GM12878 (cell line): ENCODE measurements at regions of chr3 and their contacts with region 1.

Region 1: DNA sequence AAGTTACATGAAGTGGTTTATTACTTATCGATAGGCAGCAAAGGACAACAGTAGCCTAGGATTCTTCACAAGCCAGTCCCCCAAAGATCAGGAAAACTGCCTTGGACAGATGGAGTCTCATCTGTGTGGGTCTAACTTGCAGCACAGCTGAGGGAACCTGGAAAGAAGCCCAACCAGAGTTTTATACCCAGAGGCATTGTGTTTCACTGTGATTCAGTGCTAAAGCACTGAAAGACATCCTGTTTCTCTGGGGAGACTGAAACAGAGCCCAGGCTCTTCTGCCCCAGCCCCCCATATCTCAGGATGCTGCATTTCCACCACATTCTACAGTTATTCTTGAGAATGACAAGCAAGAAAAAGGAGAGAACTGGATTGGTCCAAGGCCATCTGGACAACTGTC is 48.2 kb upstream of the PYDC2 start:
- DNase-seq: no peak
- ATAC-seq: no peak; the same call in 2 of the 3 replicates
- H3K4me3 ChIP-seq: no peak overlapping the region
- H3K27ac ChIP-seq: no peak overlapping the region
- H3K4me1 ChIP-seq: no peaks in the 10 kb centered on the region
- H3K27me3 ChIP-seq: no peaks in the 10 kb centered on the region
- CTCF ChIP-seq: no peak
- EP300 ChIP-seq: no peak
- POLR2A ChIP-seq: no peak
- RAD21 ChIP-seq: no peak

Region 2: GRCh38 chr3:191136347-191136746 is 276.4 kb before region 1 on chr3:
- CTCF ChIA-PET with region 1: interaction called, 3 read pairs
- POLR2A ChIA-PET with region 1: no interaction called
- RAD21 ChIA-PET with region 1: interaction called, 3 read pairs
- SMC1A ChIA-PET with region 1: interaction called, 5 read pairs
- in situ Hi-C with region 1: no loop called
- intact Hi-C with region 1: loop called (anchors 2 kb)
- DNase-seq: no peak
- ATAC-seq: peak; percentile 70
- H3K4me3 ChIP-seq: no peak overlapping the region
- H3K27ac ChIP-seq: no peak overlapping the region
- H3K4me1 ChIP-seq: peaks cover 24% of the 10 kb centered on the region
- H3K27me3 ChIP-seq: no peaks in the 10 kb centered on the region
- CTCF ChIP-seq: peak; percentile 43 to 51 (median 46); a peak in 4 of 6 replicates
- EP300 ChIP-seq: no peak
- POLR2A ChIP-seq: no peak
- RAD21 ChIP-seq: peak; percentile 76

Region 3: DNA sequence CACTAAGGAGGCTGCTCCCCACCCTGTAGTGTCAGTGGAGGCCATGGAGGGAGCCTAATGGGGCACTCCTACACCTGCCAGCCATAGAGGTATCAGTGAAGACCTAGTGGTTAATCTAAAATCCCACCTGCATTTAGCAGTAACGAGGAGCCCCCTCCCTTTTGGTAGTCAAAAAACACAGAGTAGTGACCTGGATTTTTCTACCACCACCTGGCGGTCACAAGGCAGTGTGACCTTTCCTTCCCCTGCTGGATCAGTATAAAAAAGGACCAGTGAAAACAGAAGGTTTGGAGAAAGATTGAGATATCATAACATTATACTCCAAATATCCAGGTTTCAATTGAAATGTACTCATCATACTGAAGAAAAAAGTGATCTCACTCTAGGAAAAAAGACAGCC is 289.4 kb after region 1 on chr3:
- CTCF ChIA-PET with region 1: no interaction called
- POLR2A ChIA-PET with region 1: no interaction called
- RAD21 ChIA-PET with region 1: no interaction called
- SMC1A ChIA-PET with region 1: no interaction called
- in situ Hi-C with region 1: no loop called
- intact Hi-C with region 1: loop called (anchors 5 kb)
- DNase-seq: no peak
- ATAC-seq: no peak; the same call in 2 of the 3 replicates
- H3K4me3 ChIP-seq: no peak overlapping the region
- H3K27ac ChIP-seq: no peak overlapping the region
- H3K4me1 ChIP-seq: no peaks in the 10 kb centered on the region
- H3K27me3 ChIP-seq: no peaks in the 10 kb centered on the region
- CTCF ChIP-seq: no peak
- EP300 ChIP-seq: no peak
- POLR2A ChIP-seq: no peak
- RAD21 ChIP-seq: no peak

Region 4: GRCh38 chr3:191813245-191813644 is 400.5 kb after region 1 on chr3:
- CTCF ChIA-PET with region 1: no interaction called
- POLR2A ChIA-PET with region 1: no interaction called
- RAD21 ChIA-PET with region 1: no interaction called
- SMC1A ChIA-PET with region 1: no interaction called
- in situ Hi-C with region 1: no loop called
- intact Hi-C with region 1: loop called (anchors 5 kb)
- DNase-seq: no peak
- ATAC-seq: no peak
- H3K4me3 ChIP-seq: no peak overlapping the region
- H3K27ac ChIP-seq: no peak overlapping the region
- H3K4me1 ChIP-seq: no peaks in the 10 kb centered on the region
- H3K27me3 ChIP-seq: no peaks in the 10 kb centered on the region
- CTCF ChIP-seq: no peak
- EP300 ChIP-seq: no peak
- POLR2A ChIP-seq: no peak
- RAD21 ChIP-seq: no peak

Region 5: DNA sequence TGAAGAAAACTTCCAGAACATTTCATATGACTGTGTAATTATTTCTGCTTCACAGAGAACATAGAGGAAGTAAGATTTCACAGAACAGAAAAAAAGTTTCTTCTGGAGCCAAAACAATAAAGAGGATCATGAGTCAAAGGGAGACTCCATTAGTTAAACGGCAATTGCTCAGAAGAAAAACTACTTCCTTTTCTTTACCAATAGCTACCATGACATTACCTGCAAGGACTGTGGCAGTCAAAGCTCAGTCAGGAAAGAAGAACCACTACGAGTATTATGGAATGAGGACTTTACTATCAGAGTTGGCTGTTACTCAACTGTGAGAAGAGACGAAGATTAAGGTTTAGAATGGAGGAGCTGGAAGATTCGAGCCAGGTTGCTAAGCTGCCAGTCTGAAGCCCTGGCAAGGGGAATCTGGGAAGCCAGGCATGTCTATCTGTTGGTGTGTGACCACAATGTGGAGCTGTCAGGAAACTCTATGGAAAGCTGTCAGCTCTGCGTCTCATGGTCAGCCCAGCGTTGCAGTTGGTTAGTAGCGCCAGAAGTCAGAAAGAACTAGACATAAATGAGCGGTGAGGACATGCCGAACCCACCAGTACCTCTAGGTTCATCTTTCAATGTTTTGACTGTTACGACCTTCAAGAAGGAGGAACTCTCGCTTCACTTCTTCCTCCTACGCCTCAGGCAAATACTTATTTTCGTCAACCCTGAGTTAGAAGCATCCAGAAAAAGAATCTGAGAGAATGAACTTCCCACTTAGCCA is 710.3 kb after region 1 on chr3:
- CTCF ChIA-PET with region 1: no interaction called
- POLR2A ChIA-PET with region 1: no interaction called
- RAD21 ChIA-PET with region 1: no interaction called
- SMC1A ChIA-PET with region 1: no interaction called
- in situ Hi-C with region 1: no loop called
- intact Hi-C with region 1: loop called (anchors 10 kb)
- DNase-seq: peak; percentile 53
- ATAC-seq: peak; percentile 90
- H3K4me3 ChIP-seq: peak overlapping the region; percentile 30; the same call in 1 of the 2 replicates
- H3K27ac ChIP-seq: peak overlapping the region; percentile 61
- H3K4me1 ChIP-seq: peaks cover 8% of the 10 kb centered on the region
- H3K27me3 ChIP-seq: no peaks in the 10 kb centered on the region
- CTCF ChIP-seq: no peak
- EP300 ChIP-seq: peak; percentile 44 to 61; a peak in 3 of 4 replicates
- POLR2A ChIP-seq: no peak
- RAD21 ChIP-seq: no peak

Region 6: DNA sequence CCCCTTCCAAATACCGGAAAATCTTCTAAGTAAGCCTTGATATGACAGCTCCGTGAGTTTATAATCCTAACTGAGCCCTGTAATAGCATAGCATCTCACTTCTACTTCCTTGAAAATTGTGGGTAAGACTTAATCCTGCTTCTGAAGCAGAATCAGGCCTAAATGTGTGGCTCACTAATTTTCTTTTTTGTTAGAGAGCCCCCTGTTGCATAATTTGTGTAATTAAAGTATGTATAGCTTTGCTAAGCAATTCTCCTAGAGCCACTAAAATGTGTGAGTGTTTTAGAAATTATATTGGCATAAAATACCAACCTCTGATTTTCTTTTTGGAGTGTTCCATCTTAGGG is 1010.2 kb after region 1 on chr3:
- CTCF ChIA-PET with region 1: no interaction called
- POLR2A ChIA-PET with region 1: no interaction called
- RAD21 ChIA-PET with region 1: interaction called, 7 read pairs
- SMC1A ChIA-PET with region 1: interaction called, 8 read pairs
- in situ Hi-C with region 1: no loop called
- intact Hi-C with region 1: loop called (anchors 1 kb)
- DNase-seq: no peak
- ATAC-seq: peak; percentile 52; the same call in 2 of the 3 replicates
- H3K4me3 ChIP-seq: no peak overlapping the region
- H3K27ac ChIP-seq: no peak overlapping the region
- H3K4me1 ChIP-seq: no peaks in the 10 kb centered on the region
- H3K27me3 ChIP-seq: no peaks in the 10 kb centered on the region
- CTCF ChIP-seq: peak; percentile 16 to 44 (median 19); a peak in 2 of 6 replicates
- EP300 ChIP-seq: no peak
- POLR2A ChIP-seq: no peak
- RAD21 ChIP-seq: peak; percentile 37; the same call in 1 of the 2 replicates